ENCODE measurements at regions of chr11 and their contacts with region 1.

Region 1: DNA sequence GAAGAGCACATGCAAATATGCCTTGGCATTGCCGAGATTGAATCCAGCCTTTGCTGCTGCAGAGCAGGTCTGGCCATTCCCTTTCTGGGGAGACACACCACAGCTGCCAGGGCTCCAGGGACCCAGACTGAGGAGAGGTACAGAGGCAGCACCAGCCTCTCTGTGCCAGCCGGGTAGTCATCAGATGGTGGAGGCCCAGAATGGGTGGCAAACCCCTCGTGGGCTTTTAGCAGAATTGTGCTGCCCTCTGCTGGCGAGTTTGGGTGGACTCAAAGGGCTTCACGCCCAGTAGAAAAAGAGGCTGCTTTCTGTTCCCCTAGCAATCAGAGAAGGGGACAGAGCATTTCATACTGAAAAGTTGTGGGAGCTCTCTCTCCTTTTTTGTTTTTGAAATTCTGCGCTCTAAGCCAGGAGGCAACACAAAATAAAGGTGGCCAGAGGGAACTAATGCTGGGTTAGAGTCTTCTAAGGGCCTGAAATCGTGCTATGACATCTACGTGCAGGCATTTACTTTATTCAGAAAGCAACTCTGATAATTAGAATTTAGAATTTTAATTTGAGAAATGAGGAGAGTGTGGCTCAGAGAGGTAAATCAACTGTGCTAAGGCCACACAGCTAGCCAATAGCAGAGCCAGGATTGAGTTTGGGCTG is 158.8 kb upstream of the NAV2 start:
- DNase-seq: peak; percentile 47
- H3K4me3 ChIP-seq: no peak overlapping the region
- H3K27ac ChIP-seq: no peak overlapping the region
- H3K4me1 ChIP-seq: no peaks in the 10 kb centered on the region
- H3K27me3 ChIP-seq: no peaks in the 10 kb centered on the region
- CTCF ChIP-seq: peak; percentile 79 to 89

Region 2: GRCh38 chr11:19071255-19071654 is 482.6 kb before region 1 on chr11:
- CTCF ChIA-PET with region 1: no interaction called
- dilution Hi-C with region 1: no loop called
- in situ Hi-C with region 1: loop called (anchors 5 kb)
- intact Hi-C with region 1: loop called (anchors 1 kb)
- DNase-seq: peak; percentile 77
- H3K4me3 ChIP-seq: peak overlapping the region in 1 of 3 experiments; percentile 23
- H3K27ac ChIP-seq: no peak overlapping the region
- H3K4me1 ChIP-seq: no peaks in the 10 kb centered on the region
- H3K27me3 ChIP-seq: no peaks in the 10 kb centered on the region
- CTCF ChIP-seq: peak; percentile 96 to 98

Region 3: GRCh38 chr11:19160847-19161246 is 393.0 kb before region 1 on chr11:
- CTCF ChIA-PET with region 1: no interaction called
- dilution Hi-C with region 1: no loop called
- in situ Hi-C with region 1: no loop called
- intact Hi-C with region 1: loop called (anchors 5 kb)
- DNase-seq: no peak
- H3K4me3 ChIP-seq: no peak overlapping the region
- H3K27ac ChIP-seq: no peak overlapping the region
- H3K4me1 ChIP-seq: no peaks in the 10 kb centered on the region
- H3K27me3 ChIP-seq: no peaks in the 10 kb centered on the region
- CTCF ChIP-seq: peak in 1 of 2 donors; percentile 19

Region 4: GRCh38 chr11:19259487-19260345 is 294.1 kb before region 1 on chr11:
- CTCF ChIA-PET with region 1: interaction called, 16 read pairs
- dilution Hi-C with region 1: no loop called
- in situ Hi-C with region 1: no loop called
- intact Hi-C with region 1: loop called (anchors 1 kb)
- DNase-seq: peak; percentile 36
- H3K4me3 ChIP-seq: no peak overlapping the region
- H3K27ac ChIP-seq: no peak overlapping the region
- H3K4me1 ChIP-seq: no peaks in the 10 kb centered on the region
- H3K27me3 ChIP-seq: no peaks in the 10 kb centered on the region
- CTCF ChIP-seq: peak; percentile 94 to 99

Region 5: DNA sequence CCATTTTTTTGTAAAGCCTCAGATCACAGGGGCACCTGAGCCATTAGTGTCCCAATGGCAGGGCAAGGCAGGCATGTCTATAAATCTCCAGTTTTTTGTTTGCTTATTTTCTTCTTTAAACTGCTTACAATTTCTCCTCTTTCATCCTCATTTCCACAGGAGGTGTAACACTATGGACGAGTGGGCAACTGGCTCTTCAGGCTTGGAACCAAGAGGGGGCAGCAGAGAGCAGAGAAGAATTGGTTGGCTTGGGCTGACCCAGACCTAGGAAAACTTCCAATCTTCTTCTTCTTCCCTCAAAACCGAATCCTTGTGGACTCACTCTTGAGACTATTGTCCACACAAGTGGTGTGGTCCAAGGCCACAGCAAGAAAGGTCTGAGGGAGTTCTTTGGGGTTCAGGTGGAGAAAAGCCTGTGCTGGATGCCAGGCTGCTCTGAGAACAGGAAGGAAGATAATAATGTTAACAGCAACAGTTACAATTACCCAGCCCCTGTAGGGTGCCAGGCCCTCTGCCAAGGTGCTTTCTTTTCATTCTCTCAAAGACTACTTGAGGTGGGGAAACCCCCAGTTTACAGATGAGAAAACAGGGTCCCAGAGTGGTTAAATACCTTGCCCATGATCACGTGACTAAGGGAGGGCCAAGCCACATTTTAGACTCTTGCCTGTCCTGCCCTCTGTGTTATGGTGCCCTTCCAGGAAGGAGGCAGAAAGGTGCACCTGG is 242.3 kb before region 1 on chr11:
- CTCF ChIA-PET with region 1: no interaction called
- dilution Hi-C with region 1: no loop called
- in situ Hi-C with region 1: loop called (anchors 5 to 10 kb)
- intact Hi-C with region 1: loop called (anchors 1 kb)
- DNase-seq: peak; percentile 24
- H3K4me3 ChIP-seq: no peak overlapping the region
- H3K27ac ChIP-seq: no peak overlapping the region
- H3K4me1 ChIP-seq: no peaks in the 10 kb centered on the region
- H3K27me3 ChIP-seq: no peaks in the 10 kb centered on the region
- CTCF ChIP-seq: peak; percentile 89 to 95

Region 6: DNA sequence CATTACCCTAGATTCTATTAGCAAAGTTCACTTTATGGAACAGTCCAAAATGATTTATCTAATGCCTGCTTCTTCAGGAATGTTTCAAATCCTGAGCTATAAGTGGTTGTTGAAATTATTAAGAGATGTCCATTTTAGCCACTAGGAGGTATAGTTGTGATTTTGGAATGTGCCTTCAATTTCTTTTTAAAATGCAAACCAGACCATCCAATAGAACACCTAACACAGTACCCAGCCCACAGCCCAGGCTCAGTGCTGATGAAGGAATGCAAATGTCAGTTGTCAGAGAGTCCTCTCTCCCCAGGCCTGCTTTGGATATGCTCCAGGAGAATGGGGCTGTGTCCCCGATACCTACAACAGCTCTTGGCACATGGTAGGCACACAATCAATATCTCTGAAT is 227.3 kb before region 1 on chr11:
- CTCF ChIA-PET with region 1: interaction called, 10 read pairs
- dilution Hi-C with region 1: no loop called
- in situ Hi-C with region 1: no loop called
- intact Hi-C with region 1: loop called (anchors 1 kb)
- DNase-seq: no peak
- H3K4me3 ChIP-seq: no peak overlapping the region
- H3K27ac ChIP-seq: no peak overlapping the region
- H3K4me1 ChIP-seq: no peaks in the 10 kb centered on the region
- H3K27me3 ChIP-seq: peaks cover 8% of the 10 kb centered on the region
- CTCF ChIP-seq: peak; percentile 14 to 36

Region 7: GRCh38 chr11:19605520-19606371 is 51.9 kb after region 1 on chr11:
- CTCF ChIA-PET with region 1: no interaction called
- dilution Hi-C with region 1: no loop called
- in situ Hi-C with region 1: no loop called
- intact Hi-C with region 1: no loop called
- DNase-seq: no peak
- H3K4me3 ChIP-seq: no peak overlapping the region
- H3K27ac ChIP-seq: no peak overlapping the region
- H3K4me1 ChIP-seq: no peaks in the 10 kb centered on the region
- H3K27me3 ChIP-seq: no peaks in the 10 kb centered on the region
- CTCF ChIP-seq: no peak

Region 8: DNA sequence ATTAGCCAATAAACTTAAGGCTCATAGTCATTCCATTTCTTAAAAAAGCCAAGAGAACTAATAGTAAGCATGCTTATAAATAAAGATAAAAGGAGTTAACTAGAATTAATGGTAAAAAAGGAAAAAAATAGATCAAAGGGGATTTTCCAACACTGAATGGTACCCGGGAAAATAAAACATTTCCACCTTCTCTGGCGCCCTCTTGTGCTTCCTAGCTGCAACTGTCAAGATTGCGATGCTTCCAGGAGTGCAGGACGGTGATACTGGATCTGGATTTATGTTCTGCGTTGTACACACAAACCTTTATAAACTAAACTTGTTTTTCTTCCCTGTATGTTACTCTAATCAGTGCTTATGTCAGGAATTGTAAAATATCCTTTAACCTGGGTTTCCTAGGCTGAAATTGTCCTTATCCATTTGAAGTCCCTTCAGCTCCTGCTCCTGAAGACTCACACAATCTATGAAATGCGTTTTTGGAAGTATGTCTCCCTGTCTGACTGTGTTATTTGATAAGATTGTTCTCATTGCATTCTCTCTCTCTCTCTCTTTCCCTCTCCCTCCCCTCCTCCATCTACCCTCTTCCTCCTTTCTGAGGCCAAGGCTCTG is 800.1 kb after region 1 on chr11:
- CTCF ChIA-PET with region 1: no interaction called
- dilution Hi-C with region 1: no loop called
- in situ Hi-C with region 1: no loop called
- intact Hi-C with region 1: loop called (anchors 5 kb)
- DNase-seq: peak; percentile 26
- H3K4me3 ChIP-seq: no peak overlapping the region
- H3K27ac ChIP-seq: no peak overlapping the region
- H3K4me1 ChIP-seq: no peaks in the 10 kb centered on the region
- H3K27me3 ChIP-seq: no peaks in the 10 kb centered on the region
- CTCF ChIP-seq: peak; percentile 92 to 97

Measured in mammary epithelial cell (primary cell).